H1 (cell line): ENCODE measurements at regions of chr22 and their contacts with region 1.

Region 1: GRCh38 chr22:37121887-37122591 is 12.5 kb upstream of the TMPRSS6 start:
- DNase-seq: no peak
- H3K4me3 ChIP-seq: no peak overlapping the region
- H3K27ac ChIP-seq: no peak overlapping the region
- H3K4me1 ChIP-seq: peaks cover 0 to 7% (median 2%) of the 10 kb centered on the region in 4 experiments; a peak in 5 of 7 replicates
- H3K27me3 ChIP-seq: 0 out of 7 replicates have a peak, but pooled peaks cover 0 to 2% (median 0%) of the 10 kb centered on the region in 4 experiments
- CTCF ChIP-seq: no peak
- EP300 ChIP-seq: no peak
- POLR2A ChIP-seq: no peak
- RAD21 ChIP-seq: no peak

Region 2: GRCh38 chr22:37098976-37099591 is 23.0 kb before region 1 on chr22:
- CTCF ChIA-PET with region 1: interaction called, 11 read pairs
- POLR2A ChIA-PET with region 1: no interaction called
- DNase-seq: peak in 1 of 2 experiments; percentile 59
- H3K4me3 ChIP-seq: no peak overlapping the region
- H3K27ac ChIP-seq: no peak overlapping the region
- H3K4me1 ChIP-seq: no peaks in the 10 kb centered on the region
- H3K27me3 ChIP-seq: peaks cover 0 to 8% (median 1%) of the 10 kb centered on the region in 4 experiments; a peak in 1 of 7 replicates
- CTCF ChIP-seq: peak; percentile 46 to 53 (median 47)
- EP300 ChIP-seq: no peak
- POLR2A ChIP-seq: no peak
- RAD21 ChIP-seq: peak; percentile 37 to 48

Region 3: GRCh38 chr22:37139762-37140161 is 17.7 kb after region 1 on chr22:
- CTCF ChIA-PET with region 1: interaction called, 20 read pairs
- POLR2A ChIA-PET with region 1: interaction called, 4 read pairs
- DNase-seq: no peak
- H3K4me3 ChIP-seq: no peak overlapping the region
- H3K27ac ChIP-seq: no peak overlapping the region
- H3K4me1 ChIP-seq: no peaks in the 10 kb centered on the region; a peak in 1 of 7 replicates
- H3K27me3 ChIP-seq: no peaks in the 10 kb centered on the region; a peak in 1 of 7 replicates
- CTCF ChIP-seq: peak in 1 of 3 experiments; percentile 13; a peak in 2 of 4 replicates
- EP300 ChIP-seq: no peak
- POLR2A ChIP-seq: no peak
- RAD21 ChIP-seq: peak in 1 of 2 experiments; percentile 27; a peak in 2 of 4 replicates